ENCODE measurements at regions of chr17 and their contacts with region 1.

Region 1: DNA sequence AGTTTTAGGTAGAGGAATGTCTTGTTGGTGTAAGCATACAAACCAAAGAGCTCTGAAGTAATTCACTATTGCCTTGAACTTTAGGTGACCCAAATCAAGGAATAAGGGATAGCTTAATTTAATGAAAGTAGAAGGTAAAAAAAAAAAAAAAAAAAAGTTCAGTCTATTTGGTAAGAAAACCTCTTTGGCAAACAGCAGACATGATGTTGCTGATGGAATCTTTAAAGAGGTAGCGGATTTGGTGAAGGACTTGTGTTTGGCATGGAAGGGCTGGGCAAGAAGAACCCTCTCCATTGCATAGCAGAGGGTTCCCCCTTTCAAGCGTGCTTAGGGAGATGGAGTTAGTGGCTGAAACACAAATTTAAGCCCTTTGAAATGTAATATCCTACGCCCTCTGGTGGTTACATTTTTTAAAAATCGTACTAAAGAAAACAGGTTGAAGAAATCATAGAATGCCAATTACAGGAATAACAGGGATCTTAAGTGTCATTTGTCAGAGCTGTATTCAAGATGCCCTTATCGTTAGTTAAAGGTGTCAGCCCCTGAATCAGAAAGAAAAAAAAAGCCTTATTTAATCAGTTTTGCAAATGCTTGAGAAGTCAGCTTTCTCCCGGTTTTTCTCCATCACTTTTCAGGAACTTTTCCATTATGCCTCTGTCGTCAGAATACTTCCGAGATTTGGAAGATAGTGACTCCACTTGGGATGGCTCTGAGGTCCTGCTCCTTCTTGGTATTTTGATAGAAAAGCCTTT is 383.1 kb downstream of the KCNJ2 start:
- DNase-seq: peak in 1 of 5 donors; percentile 18
- H3K4me3 ChIP-seq: no peak overlapping the region
- H3K27ac ChIP-seq: no peak overlapping the region
- H3K4me1 ChIP-seq: no peaks in the 10 kb centered on the region
- H3K27me3 ChIP-seq: no peaks in the 10 kb centered on the region
- CTCF ChIP-seq: peak; percentile 40 to 55 (median 50)
- EP300 ChIP-seq: no peak
- POLR2A ChIP-seq: no peak

Region 2: GRCh38 chr17:69567130-69567529 is 985.3 kb before region 1 on chr17:
- intact Hi-C with region 1: loop called in 2 of 4 experiments (anchors 10 kb)
- DNase-seq: no peak
- H3K4me3 ChIP-seq: no peak overlapping the region
- H3K27ac ChIP-seq: no peak overlapping the region
- H3K4me1 ChIP-seq: no peaks in the 10 kb centered on the region
- H3K27me3 ChIP-seq: no peaks in the 10 kb centered on the region
- CTCF ChIP-seq: no peak
- EP300 ChIP-seq: no peak
- POLR2A ChIP-seq: no peak

Region 3: GRCh38 chr17:69575346-69575761 is 977.1 kb before region 1 on chr17:
- intact Hi-C with region 1: loop called in 1 of 4 experiments (anchors 10 kb)
- DNase-seq: no peak
- H3K4me3 ChIP-seq: no peak overlapping the region
- H3K27ac ChIP-seq: peak overlapping the region in 1 of 2 donors; percentile 74
- H3K4me1 ChIP-seq: peaks cover 15% of the 10 kb centered on the region
- H3K27me3 ChIP-seq: no peaks in the 10 kb centered on the region
- CTCF ChIP-seq: no peak
- EP300 ChIP-seq: no peak
- POLR2A ChIP-seq: no peak